ENCODE measurements at regions of chr7 and their contacts with region 1.

Region 1: GRCh38 chr7:79282063-79282694 is 171.3 kb downstream of the MAGI2 start:
- DNase-seq: peak; percentile 71
- ATAC-seq: peak; percentile 70
- H3K4me3 ChIP-seq: peak overlapping the region; percentile 10
- H3K27ac ChIP-seq: peak overlapping the region; percentile 67
- H3K4me1 ChIP-seq: peaks cover 45% of the 10 kb centered on the region
- H3K27me3 ChIP-seq: no peaks in the 10 kb centered on the region
- CTCF ChIP-seq: peak; percentile 62

Region 2: DNA sequence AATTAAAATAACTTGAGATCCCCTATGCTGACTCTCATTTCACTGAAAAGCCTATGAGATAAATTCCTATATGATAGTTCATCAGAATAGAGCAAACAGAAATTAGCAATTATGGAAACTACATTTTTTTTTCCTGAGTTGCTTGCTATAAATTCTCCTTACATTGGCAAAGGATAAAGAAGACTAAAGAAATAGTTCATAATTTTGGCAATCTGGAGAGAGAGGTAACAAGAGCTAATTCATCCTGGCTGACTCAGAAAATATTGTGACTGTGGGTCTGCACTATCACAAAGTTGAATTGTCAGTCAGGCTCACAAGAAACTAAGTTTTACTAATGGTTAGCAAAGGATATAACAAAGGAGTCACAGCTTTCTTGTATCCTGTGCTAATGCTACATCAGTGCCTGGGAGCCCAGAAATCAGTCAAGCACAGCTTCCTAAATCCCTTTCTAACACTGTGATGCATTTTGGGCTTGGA is 311.7 kb before region 1 on chr7:
- CTCF ChIA-PET with region 1: no interaction called
- POLR2A ChIA-PET with region 1: no interaction called
- intact Hi-C with region 1: loop called (anchors 5 kb)
- DNase-seq: peak; percentile 83
- ATAC-seq: peak; percentile 80
- H3K4me3 ChIP-seq: no peak overlapping the region
- H3K27ac ChIP-seq: peak overlapping the region; percentile 49
- H3K4me1 ChIP-seq: peaks cover 43% of the 10 kb centered on the region
- H3K27me3 ChIP-seq: no peaks in the 10 kb centered on the region
- CTCF ChIP-seq: no peak

Region 3: GRCh38 chr7:79185605-79186004 is 96.6 kb before region 1 on chr7:
- CTCF ChIA-PET with region 1: no interaction called
- POLR2A ChIA-PET with region 1: no interaction called
- intact Hi-C with region 1: no loop called
- DNase-seq: no peak
- ATAC-seq: no peak
- H3K4me3 ChIP-seq: no peak overlapping the region
- H3K27ac ChIP-seq: no peak overlapping the region
- H3K4me1 ChIP-seq: no peaks in the 10 kb centered on the region
- H3K27me3 ChIP-seq: no peaks in the 10 kb centered on the region
- CTCF ChIP-seq: no peak

Region 4: GRCh38 chr7:79341902-79342301 is 59.7 kb after region 1 on chr7:
- CTCF ChIA-PET with region 1: no interaction called
- POLR2A ChIA-PET with region 1: no interaction called
- intact Hi-C with region 1: no loop called
- DNase-seq: peak; percentile 6
- ATAC-seq: no peak
- H3K4me3 ChIP-seq: no peak overlapping the region
- H3K27ac ChIP-seq: no peak overlapping the region
- H3K4me1 ChIP-seq: peaks cover 12% of the 10 kb centered on the region
- H3K27me3 ChIP-seq: no peaks in the 10 kb centered on the region
- CTCF ChIP-seq: peak; percentile 40; the same call in 1 of the 2 replicates